ENCODE measurements at regions of chr6 and their contacts with region 1.

Region 1: GRCh38 chr6:26270903-26271667 is 93.9 kb upstream of the BTN3A2 start:
- DNase-seq: peak; percentile 84 to 87 (median 85)
- H3K4me3 ChIP-seq: peak overlapping the region; percentile 53 to 65
- H3K4me3 Mint-ChIP-seq: peak overlapping the region in 1 of 8 donors; percentile 85
- H3K27ac ChIP-seq: peak overlapping the region; percentile 83
- H3K27ac Mint-ChIP-seq: peak overlapping the region in 5 of 7 donors; percentile 68 to 97 (median 82)
- H3K4me1 ChIP-seq: peaks cover 31% of the 10 kb centered on the region
- H3K4me1 Mint-ChIP-seq: peaks cover 0 to 22% (median 15%) of the 10 kb centered on the region in 4 donors
- H3K27me3 ChIP-seq: no peaks in the 10 kb centered on the region
- H3K27me3 Mint-ChIP-seq: no peaks in the 10 kb centered on the region

Region 2: GRCh38 chr6:26045065-26045927 is 225.8 kb before region 1 on chr6:
- CTCF ChIA-PET with region 1: interaction called, 3 read pairs
- POLR2A ChIA-PET with region 1: interaction called, 58 read pairs
- intact Hi-C with region 1: loop called (anchors 5 kb)
- DNase-seq: peak; percentile 88 to 91 (median 90)
- H3K4me3 ChIP-seq: peak overlapping the region; percentile 72 to 74
- H3K4me3 Mint-ChIP-seq: peak overlapping the region; percentile 88 to 98 (median 94)
- H3K27ac ChIP-seq: peak overlapping the region; percentile 76
- H3K27ac Mint-ChIP-seq: peak overlapping the region; percentile 93 to 99 (median 98)
- H3K4me1 ChIP-seq: peaks cover 14% of the 10 kb centered on the region
- H3K4me1 Mint-ChIP-seq: peaks cover 12 to 28% (median 20%) of the 10 kb centered on the region in 4 donors
- H3K27me3 ChIP-seq: no peaks in the 10 kb centered on the region
- H3K27me3 Mint-ChIP-seq: no peaks in the 10 kb centered on the region

Region 3: GRCh38 chr6:26175428-26176181 is 95.5 kb before region 1 on chr6:
- CTCF ChIA-PET with region 1: interaction called, 6 read pairs
- POLR2A ChIA-PET with region 1: interaction called, 79 read pairs
- intact Hi-C with region 1: loop called (anchors 1 kb)
- DNase-seq: peak; percentile 50 to 73 (median 70)
- H3K4me3 ChIP-seq: no peak overlapping the region
- H3K4me3 Mint-ChIP-seq: peak overlapping the region in 4 of 8 donors; percentile 37 to 70 (median 65)
- H3K27ac ChIP-seq: no peak overlapping the region
- H3K27ac Mint-ChIP-seq: peak overlapping the region; percentile 28 to 89 (median 78)
- H3K4me1 ChIP-seq: peaks cover 37% of the 10 kb centered on the region
- H3K4me1 Mint-ChIP-seq: peaks cover 21 to 40% (median 27%) of the 10 kb centered on the region in 4 donors
- H3K27me3 ChIP-seq: no peaks in the 10 kb centered on the region
- H3K27me3 Mint-ChIP-seq: no peaks in the 10 kb centered on the region

Region 4: GRCh38 chr6:26223650-26224546 is 47.2 kb before region 1 on chr6:
- CTCF ChIA-PET with region 1: interaction called, 4 read pairs
- POLR2A ChIA-PET with region 1: interaction called, 112 read pairs
- intact Hi-C with region 1: no loop called
- DNase-seq: peak; percentile 74 to 87 (median 84)
- H3K4me3 ChIP-seq: peak overlapping the region; percentile 45 to 82
- H3K4me3 Mint-ChIP-seq: no peak overlapping the region
- H3K27ac ChIP-seq: peak overlapping the region; percentile 69
- H3K27ac Mint-ChIP-seq: no peak overlapping the region
- H3K4me1 ChIP-seq: peaks cover 21% of the 10 kb centered on the region
- H3K4me1 Mint-ChIP-seq: peaks cover 6 to 8% (median 7%) of the 10 kb centered on the region in 4 donors
- H3K27me3 ChIP-seq: no peaks in the 10 kb centered on the region
- H3K27me3 Mint-ChIP-seq: no peaks in the 10 kb centered on the region

Region 5: GRCh38 chr6:26258200-26258977 is 12.7 kb before region 1 on chr6:
- CTCF ChIA-PET with region 1: interaction called, 12 read pairs
- POLR2A ChIA-PET with region 1: interaction called, 4 read pairs
- intact Hi-C with region 1: no loop called
- DNase-seq: no peak
- H3K4me3 ChIP-seq: no peak overlapping the region
- H3K4me3 Mint-ChIP-seq: no peak overlapping the region
- H3K27ac ChIP-seq: no peak overlapping the region
- H3K27ac Mint-ChIP-seq: no peak overlapping the region
- H3K4me1 ChIP-seq: peaks cover 3% of the 10 kb centered on the region
- H3K4me1 Mint-ChIP-seq: peaks cover 0 to 11% (median 2%) of the 10 kb centered on the region in 4 donors
- H3K27me3 ChIP-seq: no peaks in the 10 kb centered on the region
- H3K27me3 Mint-ChIP-seq: no peaks in the 10 kb centered on the region

Region 6: GRCh38 chr6:26375270-26375669 is 104.2 kb after region 1 on chr6:
- CTCF ChIA-PET with region 1: no interaction called
- POLR2A ChIA-PET with region 1: no interaction called
- intact Hi-C with region 1: no loop called
- DNase-seq: no peak
- H3K4me3 ChIP-seq: no peak overlapping the region
- H3K4me3 Mint-ChIP-seq: peak overlapping the region in 1 of 8 donors; percentile 55
- H3K27ac ChIP-seq: no peak overlapping the region
- H3K27ac Mint-ChIP-seq: peak overlapping the region; percentile 46 to 95 (median 66)
- H3K4me1 ChIP-seq: peaks cover 30% of the 10 kb centered on the region
- H3K4me1 Mint-ChIP-seq: peaks cover 26 to 67% (median 42%) of the 10 kb centered on the region in 4 donors
- H3K27me3 ChIP-seq: no peaks in the 10 kb centered on the region
- H3K27me3 Mint-ChIP-seq: no peaks in the 10 kb centered on the region

Region 7: GRCh38 chr6:26537846-26538571 is 266.9 kb after region 1 on chr6 and contains the start of gene HMGN4:
- CTCF ChIA-PET with region 1: no interaction called
- POLR2A ChIA-PET with region 1: interaction called, 21 read pairs
- intact Hi-C with region 1: no loop called
- DNase-seq: peak; percentile 92 to 96 (median 95)
- H3K4me3 ChIP-seq: peak within 1 kb of the TSS; percentile 83 to 90
- H3K4me3 Mint-ChIP-seq: peak within 1 kb of the TSS; percentile 89 to 98 (median 93)
- H3K27ac ChIP-seq: peak within 1 kb of the TSS; percentile 90
- H3K27ac Mint-ChIP-seq: peak within 1 kb of the TSS; percentile 94 to 99 (median 97)
- H3K4me1 ChIP-seq: peaks cover 66% of the 10 kb centered on the region
- H3K4me1 Mint-ChIP-seq: peaks cover 38 to 76% (median 56%) of the 10 kb centered on the region in 4 donors
- H3K27me3 ChIP-seq: no peaks in the 10 kb centered on the region
- H3K27me3 Mint-ChIP-seq: peaks cover 3 to 6% of the 10 kb centered on the region in 2 donors
- total RNA-seq, gene HMGN4: 102 to 105 TPM

Region 8: DNA sequence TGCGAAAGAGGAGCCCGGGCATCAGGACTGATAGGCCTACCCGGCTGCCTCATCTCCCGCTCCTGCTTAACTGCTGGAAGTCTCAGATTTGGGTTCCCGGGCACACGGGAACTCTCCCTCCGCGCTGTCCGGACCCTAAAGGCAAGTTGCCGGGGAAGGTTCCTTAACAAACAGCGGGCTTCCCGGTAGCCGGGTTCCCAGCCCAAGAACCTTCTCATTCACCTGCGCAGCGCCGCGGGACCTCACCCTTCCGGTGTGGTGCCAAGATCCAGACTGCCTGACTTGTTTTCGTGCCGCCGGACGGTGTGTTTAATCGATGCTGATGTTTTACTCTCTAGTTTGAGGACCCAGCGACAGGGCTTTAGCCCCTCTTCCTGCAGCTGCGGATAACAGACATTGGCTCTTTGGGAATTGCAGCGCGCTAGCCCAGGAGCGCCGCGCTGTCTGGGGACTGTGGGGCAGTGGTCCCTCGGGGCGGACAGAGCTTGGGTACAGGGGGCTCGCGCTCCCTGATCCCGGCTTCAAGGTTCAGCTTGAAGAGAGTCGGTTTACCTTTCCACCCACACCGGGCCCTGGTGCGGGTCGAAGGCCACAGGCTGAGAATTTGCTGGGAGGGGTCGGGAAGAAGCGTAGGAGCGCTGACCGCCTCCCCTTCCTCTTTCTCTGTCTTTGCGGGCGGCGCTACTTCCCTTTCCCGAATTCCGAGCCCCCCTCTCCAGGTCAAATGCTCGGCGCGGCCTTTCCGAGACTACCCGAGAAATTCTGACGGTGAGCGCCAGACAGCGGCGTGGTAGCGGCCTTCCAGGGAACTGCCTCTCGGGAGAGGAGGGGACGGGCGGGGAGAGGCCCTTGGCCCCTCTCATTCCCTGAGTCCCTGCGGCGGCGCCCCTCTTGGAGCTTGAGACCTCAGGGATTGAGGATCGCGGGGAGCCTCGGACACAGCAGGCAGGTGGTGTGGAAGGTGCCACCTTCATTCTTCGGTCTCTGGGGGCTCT is 342.9 kb after region 1 on chr6:
- CTCF ChIA-PET with region 1: no interaction called
- POLR2A ChIA-PET with region 1: no interaction called
- intact Hi-C with region 1: no loop called
- DNase-seq: peak in 2 of 5 donors; percentile 28 to 30
- H3K4me3 ChIP-seq: peak overlapping the region in 1 of 2 donors; percentile 30
- H3K4me3 Mint-ChIP-seq: peak overlapping the region; percentile 77 to 90 (median 82)
- H3K27ac ChIP-seq: no peak overlapping the region
- H3K27ac Mint-ChIP-seq: peak overlapping the region in 5 of 7 donors; percentile 29 to 86 (median 66)
- H3K4me1 ChIP-seq: peaks cover 13% of the 10 kb centered on the region
- H3K4me1 Mint-ChIP-seq: peaks cover 0 to 30% (median 14%) of the 10 kb centered on the region in 4 donors
- H3K27me3 ChIP-seq: peaks cover 19% of the 10 kb centered on the region
- H3K27me3 Mint-ChIP-seq: peaks cover 16 to 31% of the 10 kb centered on the region in 2 donors

Region 9: DNA sequence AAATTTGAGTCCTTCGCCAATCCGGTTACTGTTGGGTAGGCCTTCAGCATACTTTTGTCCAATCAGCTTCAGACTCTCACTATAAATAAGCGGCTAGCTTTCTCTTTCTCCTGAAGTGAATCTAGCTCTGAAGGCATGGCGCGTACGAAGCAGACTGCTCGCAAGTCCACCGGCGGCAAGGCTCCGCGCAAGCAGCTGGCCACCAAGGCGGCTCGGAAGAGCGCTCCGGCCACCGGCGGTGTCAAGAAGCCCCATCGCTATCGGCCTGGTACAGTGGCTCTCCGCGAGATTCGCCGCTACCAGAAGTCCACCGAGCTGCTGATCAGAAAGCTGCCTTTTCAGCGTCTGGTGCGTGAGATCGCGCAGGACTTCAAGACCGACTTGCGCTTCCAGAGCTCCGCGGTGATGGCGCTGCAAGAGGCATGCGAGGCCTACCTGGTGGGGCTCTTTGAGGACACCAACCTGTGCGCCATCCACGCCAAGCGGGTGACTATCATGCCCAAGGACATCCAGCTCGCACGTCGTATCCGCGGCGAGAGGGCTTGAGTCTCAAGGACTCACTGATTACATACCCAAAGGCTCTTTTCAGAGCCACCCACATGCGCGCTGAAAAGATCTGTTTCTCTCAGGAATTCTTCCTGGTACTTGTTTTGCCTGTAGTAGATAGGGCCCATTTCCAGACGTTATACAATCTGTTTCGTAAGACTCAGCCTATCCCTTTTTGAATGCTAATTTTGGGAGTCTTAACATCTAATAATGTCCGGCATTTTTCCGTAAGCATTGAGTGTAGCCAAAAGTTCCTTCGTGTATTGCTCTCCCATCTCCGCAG is 1539.1 kb after region 1 on chr6:
- CTCF ChIA-PET with region 1: interaction called, 3 read pairs
- POLR2A ChIA-PET with region 1: interaction called, 11 read pairs
- intact Hi-C with region 1: no loop called
- DNase-seq: peak; percentile 85 to 94 (median 92)
- H3K4me3 ChIP-seq: peak overlapping the region; percentile 31 to 67
- H3K4me3 Mint-ChIP-seq: peak overlapping the region; percentile 92 to 99 (median 96)
- H3K27ac ChIP-seq: peak overlapping the region; percentile 79
- H3K27ac Mint-ChIP-seq: peak overlapping the region; percentile 94 to 98 (median 97)
- H3K4me1 ChIP-seq: peaks cover 49% of the 10 kb centered on the region
- H3K4me1 Mint-ChIP-seq: peaks cover 39 to 74% (median 50%) of the 10 kb centered on the region in 4 donors
- H3K27me3 ChIP-seq: no peaks in the 10 kb centered on the region
- H3K27me3 Mint-ChIP-seq: no peaks in the 10 kb centered on the region